ENCODE measurements at regions of chr1 and their contacts with region 1.

Region 1: DNA sequence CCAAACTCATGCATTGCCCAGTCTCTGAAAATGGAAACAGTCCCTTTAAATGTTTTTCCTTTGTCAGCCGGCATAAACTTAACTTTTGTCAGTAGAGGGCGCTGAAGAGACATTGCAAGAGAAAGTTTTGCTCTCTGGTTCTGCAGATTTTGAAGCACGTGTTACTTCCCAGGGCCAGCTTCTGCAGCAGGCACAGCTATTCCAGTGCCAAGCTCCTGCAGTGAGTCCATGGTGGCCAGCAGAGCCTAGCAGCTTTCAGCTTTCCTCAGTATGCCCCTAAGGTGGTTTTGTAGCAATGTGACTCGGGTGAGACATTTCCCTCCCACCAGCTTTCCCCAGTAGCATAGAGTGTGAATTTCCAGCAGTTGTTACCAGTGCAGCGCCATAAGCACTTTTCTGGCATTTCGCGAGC is 2.6 kb upstream of the IFI44L start:
- DNase-seq: peak; percentile 44
- H3K4me3 ChIP-seq: no peak overlapping the region; a peak in 1 of 4 replicates
- H3K27ac ChIP-seq: no peak overlapping the region
- H3K4me1 ChIP-seq: peaks cover 6 to 24% of the 10 kb centered on the region in 2 experiments; a peak in 3 of 4 replicates
- H3K27me3 ChIP-seq: no peaks in the 10 kb centered on the region
- CTCF ChIP-seq: peak; percentile 83
- EP300 ChIP-seq: peak in 1 of 2 experiments; percentile 21; a peak in 1 of 4 replicates
- RAD21 ChIP-seq: peak; percentile 91

Region 2: GRCh38 chr1:78126506-78126905 is 491.1 kb before region 1 on chr1:
- CTCF ChIA-PET with region 1: interaction called, 13 read pairs
- POLR2A ChIA-PET with region 1: no interaction called
- DNase-seq: no peak
- H3K4me3 ChIP-seq: no peak overlapping the region
- H3K27ac ChIP-seq: no peak overlapping the region
- H3K4me1 ChIP-seq: no peaks in the 10 kb centered on the region
- H3K27me3 ChIP-seq: no peaks in the 10 kb centered on the region
- CTCF ChIP-seq: no peak
- EP300 ChIP-seq: no peak
- RAD21 ChIP-seq: no peak

Region 3: DNA sequence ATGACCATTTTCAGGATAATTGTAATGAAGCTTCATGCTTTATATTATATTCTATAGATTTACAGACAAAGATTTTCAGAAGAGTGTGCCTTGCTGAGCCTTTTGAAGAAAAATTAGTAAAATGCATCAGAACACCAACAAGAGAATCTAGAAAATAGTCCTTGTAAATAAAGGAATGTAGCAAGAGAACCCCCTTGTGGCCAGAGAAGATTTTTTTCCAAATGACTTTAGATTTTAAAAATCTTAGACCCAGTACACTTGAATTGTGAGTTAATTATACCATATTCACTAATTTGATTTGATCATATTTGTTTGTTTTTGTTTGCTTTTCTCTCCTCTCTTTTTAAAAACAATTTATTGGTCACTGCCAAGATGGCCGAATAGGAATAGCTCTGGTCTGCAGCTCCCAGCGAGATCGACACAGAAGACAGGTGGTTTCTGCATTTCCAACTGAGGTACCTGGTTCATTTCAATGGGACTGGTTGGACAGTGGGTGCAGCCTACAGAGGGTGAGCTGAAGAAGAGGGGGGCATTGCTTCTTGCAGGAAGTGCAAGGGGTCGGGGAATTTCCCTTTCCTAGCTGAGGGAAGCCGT is 10.2 kb before region 1 on chr1:
- CTCF ChIA-PET with region 1: interaction called, 32 read pairs
- POLR2A ChIA-PET with region 1: no interaction called
- DNase-seq: peak; percentile 19
- H3K4me3 ChIP-seq: no peak overlapping the region
- H3K27ac ChIP-seq: no peak overlapping the region
- H3K4me1 ChIP-seq: peaks cover 0 to 5% of the 10 kb centered on the region in 2 experiments; a peak in 1 of 4 replicates
- H3K27me3 ChIP-seq: no peaks in the 10 kb centered on the region
- CTCF ChIP-seq: peak; percentile 78
- EP300 ChIP-seq: no peak
- RAD21 ChIP-seq: peak; percentile 83

Region 4: GRCh38 chr1:78664763-78665162 is 47.1 kb after region 1 on chr1:
- CTCF ChIA-PET with region 1: interaction called, 27 read pairs
- POLR2A ChIA-PET with region 1: no interaction called
- DNase-seq: no peak
- H3K4me3 ChIP-seq: no peak overlapping the region
- H3K27ac ChIP-seq: no peak overlapping the region
- H3K4me1 ChIP-seq: peaks cover 0 to 2% of the 10 kb centered on the region in 2 experiments; a peak in 1 of 4 replicates
- H3K27me3 ChIP-seq: no peaks in the 10 kb centered on the region
- CTCF ChIP-seq: no peak
- EP300 ChIP-seq: no peak
- RAD21 ChIP-seq: no peak

Region 5: DNA sequence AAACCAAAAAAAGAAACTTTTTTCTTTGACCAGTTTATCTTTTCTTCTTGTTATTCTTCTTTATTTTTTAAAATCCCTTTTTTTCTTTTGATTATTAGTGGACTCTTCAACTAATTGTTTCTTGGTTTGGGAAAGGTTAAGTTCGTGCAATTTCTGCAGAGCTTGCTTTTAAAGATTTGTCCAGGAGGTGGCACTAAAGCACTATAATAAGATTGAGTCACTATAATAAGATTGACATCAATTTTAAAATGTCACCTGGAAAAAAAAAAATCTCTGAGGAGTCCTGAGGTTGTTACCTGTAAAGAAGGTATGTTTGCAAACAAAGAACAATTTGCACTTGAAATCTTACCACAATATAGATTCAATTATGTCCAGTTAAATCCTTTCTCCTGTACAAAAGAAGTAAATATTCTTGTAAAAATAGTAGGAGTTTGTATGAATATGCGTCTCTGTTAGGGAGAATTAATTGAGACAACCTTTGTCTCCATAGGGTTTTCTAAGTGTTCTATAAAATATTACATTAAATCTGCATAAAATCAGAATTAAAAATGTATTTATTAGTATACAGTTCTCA is 222.2 kb after region 1 on chr1:
- CTCF ChIA-PET with region 1: interaction called, 10 read pairs
- POLR2A ChIA-PET with region 1: no interaction called
- DNase-seq: peak; percentile 40
- H3K4me3 ChIP-seq: 0 out of 4 replicates have a peak overlapping the region, but pooled peaks of 1 of the 2 experiments have one; percentile 32
- H3K27ac ChIP-seq: peak overlapping the region; percentile 32 to 90; a peak in 2 of 4 replicates
- H3K4me1 ChIP-seq: peaks cover 5 to 29% of the 10 kb centered on the region in 2 experiments; a peak in 3 of 4 replicates
- H3K27me3 ChIP-seq: no peaks in the 10 kb centered on the region
- CTCF ChIP-seq: peak; percentile 87
- EP300 ChIP-seq: no peak
- RAD21 ChIP-seq: peak; percentile 84

Measured in SK-N-SH (cell line).